OCI-LY7 (cell line): ENCODE measurements at regions of chr12 and their contacts with region 1.

Region 1: GRCh38 chr12:24997970-24998582 is 49.2 kb upstream of the BCAT1 start:
- DNase-seq: peak; percentile 96
- H3K4me3 ChIP-seq: peak overlapping the region; percentile 63
- H3K27ac ChIP-seq: peak overlapping the region; percentile 98
- H3K4me1 ChIP-seq: peaks cover 98% of the 10 kb centered on the region
- CTCF ChIP-seq: no peak

Region 2: DNA sequence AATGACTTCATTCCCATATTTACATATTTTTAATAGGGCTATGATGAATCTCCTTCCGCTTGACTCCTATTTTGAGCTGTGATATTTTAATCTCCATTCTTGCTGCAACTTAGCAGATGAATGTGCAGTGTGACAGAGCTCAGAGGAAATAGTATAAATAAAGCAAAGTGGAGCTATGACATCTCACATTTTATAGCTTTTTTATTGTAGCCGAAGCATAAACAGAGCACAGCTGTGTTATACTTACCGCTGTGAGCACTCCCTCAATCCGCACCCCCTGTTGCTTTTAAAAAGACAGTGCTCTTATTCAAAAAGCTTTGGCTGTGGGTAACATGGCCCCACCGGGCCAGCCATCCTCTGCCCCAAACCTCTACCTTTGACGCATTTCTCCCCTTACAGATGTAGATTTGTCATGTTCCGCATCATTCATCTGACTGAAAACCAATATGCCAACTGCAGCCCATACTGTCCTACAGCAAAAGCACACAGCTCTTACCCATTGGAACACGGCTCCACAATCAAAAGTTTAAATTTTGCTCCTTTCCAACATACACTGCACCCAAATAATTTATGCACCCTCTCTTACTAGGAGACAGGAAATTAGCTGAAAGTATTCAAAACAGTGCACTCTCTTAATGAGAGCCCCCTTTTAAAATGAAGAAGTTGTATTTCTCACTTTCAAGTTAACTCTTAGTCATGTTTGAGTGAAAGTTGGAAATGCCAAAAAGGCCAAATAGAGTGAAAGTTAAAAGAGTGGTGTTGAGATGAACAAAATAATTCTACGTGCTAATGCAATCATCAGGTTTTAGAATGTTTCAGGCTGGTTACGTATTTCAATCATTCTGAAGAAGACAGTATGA is 619.3 kb before region 1 on chr12:
- CTCF ChIA-PET with region 1: no interaction called
- POLR2A ChIA-PET with region 1: no interaction called
- intact Hi-C with region 1: no loop called
- DNase-seq: no peak
- H3K4me3 ChIP-seq: no peak overlapping the region
- H3K27ac ChIP-seq: no peak overlapping the region
- H3K4me1 ChIP-seq: no peaks in the 10 kb centered on the region
- CTCF ChIP-seq: no peak

Region 3: DNA sequence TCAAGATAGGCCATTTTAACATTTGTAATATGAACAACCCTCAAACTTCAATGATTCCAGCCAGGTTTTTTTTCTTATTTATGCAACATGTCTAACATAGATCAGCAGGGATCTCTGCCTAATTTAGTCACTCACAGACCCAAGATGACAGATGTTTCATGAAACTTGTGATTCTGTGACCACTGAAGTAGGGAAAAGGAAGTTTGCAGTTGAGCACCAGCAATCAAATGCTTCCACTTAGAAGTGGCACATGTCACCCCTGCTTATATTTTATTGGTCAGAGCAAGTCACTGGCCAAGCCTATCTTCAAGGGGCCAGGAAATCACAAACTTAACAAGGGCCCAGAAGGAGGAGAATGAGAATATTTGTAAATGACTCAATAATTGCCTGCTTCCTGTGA is 199.7 kb before region 1 on chr12:
- CTCF ChIA-PET with region 1: no interaction called
- POLR2A ChIA-PET with region 1: no interaction called
- intact Hi-C with region 1: no loop called
- DNase-seq: peak; percentile 86
- H3K4me3 ChIP-seq: no peak overlapping the region
- H3K27ac ChIP-seq: peak overlapping the region; percentile 44
- H3K4me1 ChIP-seq: peaks cover 14% of the 10 kb centered on the region
- CTCF ChIP-seq: no peak

Region 4: GRCh38 chr12:25025951-25026490 is 27.9 kb after region 1 on chr12:
- CTCF ChIA-PET with region 1: interaction called, 12 read pairs
- POLR2A ChIA-PET with region 1: interaction called, 854 read pairs
- intact Hi-C with region 1: loop called (anchors 1 kb)
- DNase-seq: peak; percentile 80
- H3K4me3 ChIP-seq: peak overlapping the region; percentile 47
- H3K27ac ChIP-seq: peak overlapping the region; percentile 98
- H3K4me1 ChIP-seq: peaks cover 63% of the 10 kb centered on the region
- CTCF ChIP-seq: no peak